Mammary epithelial cell (primary cell): ENCODE measurements at regions of chr17 and their contacts with region 1.

Region 1: GRCh38 chr17:28644985-28645939 is at the start of gene BLTP2:
- DNase-seq: peak; percentile 93
- H3K4me3 ChIP-seq: peak within 1 kb of the TSS; percentile 73 to 91 (median 76)
- H3K27ac ChIP-seq: peak within 1 kb of the TSS; percentile 73
- H3K4me1 ChIP-seq: peaks cover 17% of the 10 kb centered on the region
- H3K27me3 ChIP-seq: no peaks in the 10 kb centered on the region
- CTCF ChIP-seq: no peak
- total RNA-seq, gene BLTP2: 117 to 124 TPM

Region 2: GRCh38 chr17:28585851-28586250 is 59.4 kb before region 1 on chr17:
- CTCF ChIA-PET with region 1: no interaction called
- dilution Hi-C with region 1: no loop called
- in situ Hi-C with region 1: loop called in 1 of 2 experiments (anchors 10 kb)
- intact Hi-C with region 1: no loop called
- DNase-seq: no peak
- H3K4me3 ChIP-seq: no peak overlapping the region
- H3K27ac ChIP-seq: no peak overlapping the region
- H3K4me1 ChIP-seq: no peaks in the 10 kb centered on the region
- H3K27me3 ChIP-seq: no peaks in the 10 kb centered on the region
- CTCF ChIP-seq: no peak

Region 3: GRCh38 chr17:28661635-28662537 is 16.6 kb after region 1 on chr17 and contains the starts of genes SDF2 and SUPT6H:
- CTCF ChIA-PET with region 1: interaction called, 4 read pairs
- dilution Hi-C with region 1: no loop called
- in situ Hi-C with region 1: no loop called
- intact Hi-C with region 1: loop called (anchors 2 kb)
- DNase-seq: peak; percentile 85
- H3K4me3 ChIP-seq: peak within 1 kb of the TSS; percentile 96 to 99 (median 96)
- H3K27ac ChIP-seq: peak within 1 kb of the TSS; percentile 95
- H3K4me1 ChIP-seq: peaks cover 16% of the 10 kb centered on the region
- H3K27me3 ChIP-seq: no peaks in the 10 kb centered on the region
- CTCF ChIP-seq: no peak
- total RNA-seq, gene SDF2: 37.7 to 37.8 TPM
- total RNA-seq, gene SUPT6H: 51.7 to 78.9 TPM

Region 4: GRCh38 chr17:28675980-28676379 is 30.7 kb after region 1 on chr17:
- CTCF ChIA-PET with region 1: interaction called, 3 read pairs
- dilution Hi-C with region 1: no loop called
- in situ Hi-C with region 1: no loop called
- intact Hi-C with region 1: loop called (anchors 1 kb)
- DNase-seq: peak; percentile 16
- H3K4me3 ChIP-seq: no peak overlapping the region
- H3K27ac ChIP-seq: no peak overlapping the region
- H3K4me1 ChIP-seq: no peaks in the 10 kb centered on the region
- H3K27me3 ChIP-seq: no peaks in the 10 kb centered on the region
- CTCF ChIP-seq: peak; percentile 45 to 66

Region 5: GRCh38 chr17:28717578-28718333 is 72.5 kb after region 1 on chr17 and contains the start of gene RAB34:
- CTCF ChIA-PET with region 1: interaction called, 4 read pairs
- dilution Hi-C with region 1: no loop called
- in situ Hi-C with region 1: no loop called
- intact Hi-C with region 1: loop called (anchors 2 kb)
- DNase-seq: peak; percentile 73
- H3K4me3 ChIP-seq: peak within 1 kb of the TSS; percentile 67 to 85 (median 69)
- H3K27ac ChIP-seq: peak within 1 kb of the TSS; percentile 93
- H3K4me1 ChIP-seq: peaks cover 42% of the 10 kb centered on the region
- H3K27me3 ChIP-seq: no peaks in the 10 kb centered on the region
- CTCF ChIP-seq: peak in 1 of 2 donors; percentile 41
- total RNA-seq, gene RAB34: 68.2 to 83.4 TPM